Activated CD4-positive, alpha-beta memory T cell treated with anti-CD3 and anti-CD28 coated beads, Interleukin-2, amount 10 ng/mL, durations not matched to agents 7 days and 5 days (primary cell): ENCODE measurements at regions of chr14 and their contacts with region 1.

Region 1: GRCh38 chr14:49971156-49972130 is 78.6 kb downstream of the ARF6 start:
- DNase-seq: peak; percentile 63
- H3K4me3 Mint-ChIP-seq: peak overlapping the region; percentile 72
- H3K27ac Mint-ChIP-seq: peak overlapping the region; percentile 98
- H3K4me1 Mint-ChIP-seq: peaks cover 57% of the 10 kb centered on the region
- H3K27me3 Mint-ChIP-seq: no peaks in the 10 kb centered on the region

Region 2: GRCh38 chr14:49767562-49768300 is 203.7 kb before region 1 on chr14 and contains the start of gene KLHDC2:
- CTCF ChIA-PET with region 1: no interaction called
- POLR2A ChIA-PET with region 1: interaction called, 11 read pairs
- DNase-seq: peak; percentile 92
- H3K4me3 Mint-ChIP-seq: peak within 1 kb of the TSS; percentile 98
- H3K27ac Mint-ChIP-seq: peak within 1 kb of the TSS; percentile 98
- H3K4me1 Mint-ChIP-seq: peaks cover 37% of the 10 kb centered on the region
- H3K27me3 Mint-ChIP-seq: no peaks in the 10 kb centered on the region
- total RNA-seq, gene KLHDC2: 34.3 to 34.7 TPM

Region 3: GRCh38 chr14:49892636-49893308 is 78.7 kb before region 1 on chr14 and contains the start of gene ARF6:
- CTCF ChIA-PET with region 1: interaction called, 5 read pairs
- POLR2A ChIA-PET with region 1: interaction called, 95 read pairs
- DNase-seq: peak; percentile 98
- H3K4me3 Mint-ChIP-seq: peak within 1 kb of the TSS; percentile 96
- H3K27ac Mint-ChIP-seq: peak within 1 kb of the TSS; percentile 100
- H3K4me1 Mint-ChIP-seq: peaks cover 20% of the 10 kb centered on the region
- H3K27me3 Mint-ChIP-seq: no peaks in the 10 kb centered on the region
- total RNA-seq, gene ARF6: 198 to 199 TPM

Region 4: GRCh38 chr14:49946320-49947141 is 24.9 kb before region 1 on chr14:
- CTCF ChIA-PET with region 1: interaction called, 37 read pairs
- POLR2A ChIA-PET with region 1: interaction called, 130 read pairs
- DNase-seq: peak; percentile 35
- H3K4me3 Mint-ChIP-seq: peak overlapping the region; percentile 41
- H3K27ac Mint-ChIP-seq: peak overlapping the region; percentile 87
- H3K4me1 Mint-ChIP-seq: peaks cover 77% of the 10 kb centered on the region
- H3K27me3 Mint-ChIP-seq: no peaks in the 10 kb centered on the region

Region 5: DNA sequence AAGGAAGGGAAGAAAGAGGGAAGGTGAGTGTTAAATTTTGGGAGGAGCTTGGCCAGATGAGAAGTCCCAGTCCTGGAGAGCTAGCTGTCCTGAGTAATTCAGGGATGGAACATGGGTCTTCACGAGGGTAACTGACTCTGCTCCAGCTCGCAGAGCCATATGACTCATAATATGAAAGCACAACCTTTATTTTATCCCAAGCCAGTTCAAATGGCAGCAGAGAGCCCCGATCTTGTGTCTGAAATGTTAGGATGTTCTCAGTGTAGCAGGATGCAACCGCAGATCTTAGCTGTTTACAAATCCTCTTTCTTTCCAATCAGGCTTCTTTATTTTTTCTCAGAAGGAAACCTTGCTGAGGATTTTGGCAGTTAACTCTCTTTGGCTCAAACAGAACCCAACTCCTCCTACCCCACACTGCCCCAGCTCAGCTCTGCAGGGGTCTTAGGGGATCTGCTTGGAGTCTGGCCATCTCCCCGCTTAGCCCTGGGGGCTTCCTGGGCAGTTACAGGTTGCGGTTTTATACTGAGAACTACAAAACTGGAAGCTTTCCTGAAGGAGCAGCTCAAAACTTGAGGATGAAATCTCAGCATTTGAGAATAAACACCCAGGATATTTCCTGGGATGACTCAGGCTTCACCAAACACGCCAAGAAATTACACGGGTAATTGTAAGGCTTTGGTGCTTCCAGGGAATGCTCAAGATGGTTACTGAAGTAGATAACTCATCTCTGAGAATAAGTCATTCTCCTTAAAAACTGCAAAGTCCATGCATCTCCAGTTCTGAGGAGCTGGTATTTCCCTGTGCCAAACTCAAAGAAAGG is 52.4 kb after region 1 on chr14:
- CTCF ChIA-PET with region 1: no interaction called
- POLR2A ChIA-PET with region 1: no interaction called
- DNase-seq: no peak
- H3K4me3 Mint-ChIP-seq: no peak overlapping the region
- H3K27ac Mint-ChIP-seq: no peak overlapping the region
- H3K4me1 Mint-ChIP-seq: peaks cover 30% of the 10 kb centered on the region
- H3K27me3 Mint-ChIP-seq: no peaks in the 10 kb centered on the region

Region 6: DNA sequence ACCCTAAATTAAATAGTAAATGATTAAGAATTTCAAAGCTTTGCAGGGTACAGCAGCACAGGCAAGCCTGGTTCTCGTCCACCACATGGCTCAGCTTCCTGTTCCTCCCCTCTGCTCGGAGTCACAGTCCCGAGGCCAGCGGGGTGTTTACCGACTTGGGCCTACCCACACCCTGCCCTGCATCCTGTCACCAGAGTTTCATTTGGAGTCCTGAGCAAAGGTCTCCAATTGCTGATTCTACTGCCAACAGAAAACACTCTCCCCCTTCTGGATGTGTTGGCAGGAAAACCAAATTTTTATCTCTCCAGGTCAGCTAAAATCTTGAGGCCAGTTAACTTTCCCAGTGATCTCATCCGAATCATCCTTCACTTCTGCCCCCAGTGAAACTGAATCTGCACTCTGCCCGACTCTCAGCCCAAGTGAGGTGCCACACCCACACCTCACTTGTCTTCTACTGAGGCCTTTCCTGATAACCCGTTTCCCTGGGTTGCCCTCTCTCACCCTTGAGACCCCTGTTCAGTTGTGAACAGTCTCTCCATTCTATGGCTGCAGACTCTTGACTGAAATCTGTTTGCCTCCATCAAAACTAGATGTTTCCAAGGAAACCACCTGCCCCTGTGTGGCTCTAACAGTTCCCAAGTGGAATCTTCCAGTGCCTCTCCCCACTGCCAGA is 73.7 kb after region 1 on chr14:
- CTCF ChIA-PET with region 1: no interaction called
- POLR2A ChIA-PET with region 1: interaction called, 32 read pairs
- DNase-seq: peak; percentile 89
- H3K4me3 Mint-ChIP-seq: peak overlapping the region; percentile 6
- H3K27ac Mint-ChIP-seq: peak overlapping the region; percentile 92
- H3K4me1 Mint-ChIP-seq: peaks cover 70% of the 10 kb centered on the region
- H3K27me3 Mint-ChIP-seq: no peaks in the 10 kb centered on the region

Region 7: GRCh38 chr14:50231475-50232275 is 260.2 kb after region 1 on chr14 and contains the start of gene SOS2:
- CTCF ChIA-PET with region 1: no interaction called
- POLR2A ChIA-PET with region 1: no interaction called
- DNase-seq: peak; percentile 84
- H3K4me3 Mint-ChIP-seq: peak within 1 kb of the TSS; percentile 73
- H3K27ac Mint-ChIP-seq: peak within 1 kb of the TSS; percentile 73
- H3K4me1 Mint-ChIP-seq: peaks cover 51% of the 10 kb centered on the region
- H3K27me3 Mint-ChIP-seq: peaks cover 10% of the 10 kb centered on the region
- total RNA-seq, gene SOS2: 21.7 to 22.4 TPM

Region 8: DNA sequence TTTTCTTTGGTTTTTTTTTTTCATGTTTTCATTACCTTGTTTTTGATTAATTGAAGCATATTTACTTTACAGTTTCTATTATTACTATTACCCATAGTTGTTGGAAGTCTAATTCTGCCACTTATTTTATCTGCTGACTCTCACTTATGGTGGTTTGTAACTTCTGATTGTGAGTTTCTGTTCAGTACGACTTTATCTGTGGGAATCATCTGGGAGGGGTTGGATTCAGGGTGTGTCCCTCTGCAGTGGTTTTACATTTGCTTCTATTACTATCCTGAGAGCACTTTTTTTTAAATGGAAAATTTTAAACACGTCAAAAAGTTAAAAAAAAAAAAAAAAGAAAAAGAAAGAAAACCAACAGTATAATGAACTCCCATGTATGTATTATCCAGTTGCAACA is 286.3 kb after region 1 on chr14:
- CTCF ChIA-PET with region 1: no interaction called
- POLR2A ChIA-PET with region 1: no interaction called
- DNase-seq: no peak
- H3K4me3 Mint-ChIP-seq: no peak overlapping the region
- H3K27ac Mint-ChIP-seq: no peak overlapping the region
- H3K4me1 Mint-ChIP-seq: peaks cover 7% of the 10 kb centered on the region
- H3K27me3 Mint-ChIP-seq: no peaks in the 10 kb centered on the region